ENCODE measurements at regions of chr17 and their contacts with region 1.

Region 1: DNA sequence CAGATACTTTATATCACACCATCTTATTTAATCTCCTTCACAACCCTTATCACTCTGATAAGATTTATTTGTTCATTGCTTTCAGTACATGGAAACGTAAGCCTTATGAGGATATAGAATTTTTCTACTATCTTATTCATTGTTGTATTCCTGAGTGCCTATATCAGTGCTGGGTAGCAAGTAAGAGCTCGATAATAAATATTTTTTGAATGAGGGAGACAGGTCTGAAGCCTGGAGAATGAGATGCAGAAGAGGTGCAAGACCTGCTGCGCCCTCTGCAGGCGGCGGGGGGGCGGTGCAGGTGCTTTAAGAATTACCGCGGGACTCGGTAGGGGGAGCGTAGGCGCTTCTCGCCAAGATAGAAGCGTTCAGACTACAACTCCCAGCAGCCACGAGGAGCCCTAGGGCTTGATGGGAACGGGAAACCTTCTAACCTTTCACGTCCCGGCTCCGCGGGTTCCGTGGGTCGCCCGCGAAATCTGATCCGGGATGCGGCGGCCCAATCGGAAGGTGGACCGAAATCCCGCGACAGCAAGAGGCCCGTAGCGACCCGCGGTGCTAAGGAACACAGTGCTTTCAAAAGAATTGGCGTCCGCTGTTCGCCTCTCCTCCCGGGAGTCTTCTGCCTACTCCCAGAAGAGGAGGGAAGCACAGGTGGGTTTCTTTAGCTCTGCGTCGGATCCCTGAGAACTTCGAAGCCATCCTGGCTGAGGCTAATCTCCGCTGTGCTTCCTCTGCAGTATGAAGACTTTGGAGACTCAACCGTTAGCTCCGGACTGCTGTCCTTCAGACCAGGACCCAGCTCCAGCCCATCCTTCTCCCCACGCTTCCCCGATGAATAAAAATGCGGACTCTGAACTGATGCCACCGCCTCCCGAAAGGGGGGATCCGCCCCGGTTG is at the start of gene WRAP53:
- DNase-seq: peak; percentile 97
- ATAC-seq: peak; percentile 81
- H3K4me3 Mint-ChIP-seq: peak within 1 kb of the TSS; percentile 83
- H3K27ac Mint-ChIP-seq: peak within 1 kb of the TSS; percentile 97
- H3K4me1 Mint-ChIP-seq: peaks cover 35% of the 10 kb centered on the region
- H3K27me3 Mint-ChIP-seq: no peaks in the 10 kb centered on the region
- total RNA-seq, gene WRAP53: 23.5 to 27.1 TPM

Region 2: GRCh38 chr17:7214300-7215135 is 473.6 kb before region 1 on chr17:
- CTCF ChIA-PET with region 1: no interaction called
- POLR2A ChIA-PET with region 1: no interaction called
- intact Hi-C with region 1: loop called in 1 of 2 experiments (anchors 2 kb)
- DNase-seq: peak; percentile 100
- ATAC-seq: peak; percentile 82
- H3K4me3 Mint-ChIP-seq: peak overlapping the region; percentile 81
- H3K27ac Mint-ChIP-seq: peak overlapping the region; percentile 93
- H3K4me1 Mint-ChIP-seq: peaks cover 71% of the 10 kb centered on the region
- H3K27me3 Mint-ChIP-seq: peaks cover 7% of the 10 kb centered on the region

Region 3: GRCh38 chr17:7403977-7404736 is 284.0 kb before region 1 on chr17 and contains the start of gene TMEM256:
- CTCF ChIA-PET with region 1: interaction called, 3 read pairs
- POLR2A ChIA-PET with region 1: interaction called, 9 read pairs
- intact Hi-C with region 1: loop called in 1 of 2 experiments (anchors 1 kb)
- DNase-seq: peak; percentile 99
- ATAC-seq: peak; percentile 94
- H3K4me3 Mint-ChIP-seq: peak within 1 kb of the TSS; percentile 89
- H3K27ac Mint-ChIP-seq: peak within 1 kb of the TSS; percentile 92
- H3K4me1 Mint-ChIP-seq: peaks cover 16% of the 10 kb centered on the region
- H3K27me3 Mint-ChIP-seq: peaks cover 2% of the 10 kb centered on the region
- total RNA-seq, gene TMEM256: 55.8 to 58.1 TPM

Region 4: GRCh38 chr17:7561028-7561575 is 127.1 kb before region 1 on chr17:
- CTCF ChIA-PET with region 1: interaction called, 8 read pairs
- POLR2A ChIA-PET with region 1: no interaction called
- intact Hi-C with region 1: loop called in 1 of 2 experiments (anchors 1 kb)
- DNase-seq: peak; percentile 92
- ATAC-seq: peak; percentile 75
- H3K4me3 Mint-ChIP-seq: peak overlapping the region; percentile 79
- H3K27ac Mint-ChIP-seq: peak overlapping the region; percentile 87
- H3K4me1 Mint-ChIP-seq: peaks cover 46% of the 10 kb centered on the region
- H3K27me3 Mint-ChIP-seq: no peaks in the 10 kb centered on the region

Region 5: DNA sequence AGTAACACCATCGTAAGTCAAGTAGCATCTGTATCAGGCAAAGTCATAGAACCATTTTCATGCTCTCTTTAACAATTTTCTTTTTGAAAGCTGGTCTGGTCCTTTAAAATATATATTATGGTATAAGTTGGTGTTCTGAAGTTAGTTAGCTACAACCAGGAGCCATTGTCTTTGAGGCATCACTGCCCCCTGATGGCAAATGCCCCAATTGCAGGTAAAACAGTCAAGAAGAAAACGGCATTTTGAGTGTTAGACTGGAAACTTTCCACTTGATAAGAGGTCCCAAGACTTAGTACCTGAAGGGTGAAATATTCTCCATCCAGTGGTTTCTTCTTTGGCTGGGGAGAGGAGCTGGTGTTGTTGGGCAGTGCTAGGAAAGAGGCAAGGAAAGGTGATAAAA is 14.9 kb before region 1 on chr17:
- CTCF ChIA-PET with region 1: interaction called, 15 read pairs
- POLR2A ChIA-PET with region 1: interaction called, 3 read pairs
- intact Hi-C with region 1: no loop called
- DNase-seq: peak; percentile 73
- ATAC-seq: no peak
- H3K4me3 Mint-ChIP-seq: no peak overlapping the region
- H3K27ac Mint-ChIP-seq: no peak overlapping the region
- H3K4me1 Mint-ChIP-seq: no peaks in the 10 kb centered on the region
- H3K27me3 Mint-ChIP-seq: no peaks in the 10 kb centered on the region

Region 6: DNA sequence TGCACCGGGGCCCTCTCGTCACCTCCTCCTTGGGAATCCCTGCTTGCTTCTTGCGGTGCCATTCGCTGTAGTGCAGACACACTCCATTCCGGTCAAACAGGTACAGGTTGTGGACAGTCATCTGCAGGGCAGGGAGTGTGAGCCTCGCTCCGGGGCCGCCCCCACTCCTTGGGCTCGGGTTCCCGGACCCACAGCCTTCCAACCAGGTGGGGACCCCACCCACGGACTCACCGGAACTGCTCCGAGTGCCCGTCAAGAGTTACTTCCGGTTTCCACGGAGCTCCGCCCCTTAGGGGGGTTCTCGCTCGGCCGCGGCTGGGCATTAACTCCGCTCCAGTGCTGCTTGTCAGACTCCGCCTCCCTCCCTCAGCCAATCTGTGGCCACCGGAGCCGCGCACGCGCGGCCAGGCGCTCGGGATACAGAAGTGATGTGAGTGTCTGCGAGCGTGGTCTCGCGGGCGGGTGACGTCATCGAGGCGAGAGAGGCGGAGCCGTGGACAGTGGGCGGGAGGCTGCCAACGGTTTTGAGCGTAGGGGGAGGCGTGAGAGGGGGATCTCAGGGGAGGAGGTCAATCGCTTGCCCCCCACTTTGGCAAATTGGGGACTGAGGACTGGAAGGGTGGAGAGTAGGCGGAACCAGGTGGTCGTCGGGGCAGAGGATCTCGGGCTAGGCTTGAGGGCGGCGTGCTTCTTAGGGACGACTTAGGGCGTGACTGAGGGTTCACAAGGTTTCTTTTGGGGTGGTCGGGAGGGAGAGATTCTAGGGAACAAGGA is 243.7 kb after region 1 on chr17 and contains the starts of genes CNTROB and TRAPPC1:
- CTCF ChIA-PET with region 1: no interaction called
- POLR2A ChIA-PET with region 1: interaction called, 6 read pairs
- intact Hi-C with region 1: loop called in 1 of 2 experiments (anchors 1 kb)
- DNase-seq: peak; percentile 100
- ATAC-seq: peak; percentile 99
- H3K4me3 Mint-ChIP-seq: peak within 1 kb of the TSS; percentile 95
- H3K27ac Mint-ChIP-seq: peak within 1 kb of the TSS; percentile 96
- H3K4me1 Mint-ChIP-seq: peaks cover 44% of the 10 kb centered on the region
- H3K27me3 Mint-ChIP-seq: no peaks in the 10 kb centered on the region
- total RNA-seq, gene CNTROB: 53.0 to 80.5 TPM
- total RNA-seq, gene TRAPPC1: 166 to 169 TPM

Region 7: GRCh38 chr17:8383143-8383822 is 695.1 kb after region 1 on chr17 and contains the start of gene RPL26:
- CTCF ChIA-PET with region 1: no interaction called
- POLR2A ChIA-PET with region 1: interaction called, 3 read pairs
- intact Hi-C with region 1: loop called in 1 of 2 experiments (anchors 2 kb)
- DNase-seq: peak; percentile 96
- ATAC-seq: peak; percentile 92
- H3K4me3 Mint-ChIP-seq: peak within 1 kb of the TSS; percentile 100
- H3K27ac Mint-ChIP-seq: peak within 1 kb of the TSS; percentile 99
- H3K4me1 Mint-ChIP-seq: peaks cover 50% of the 10 kb centered on the region
- H3K27me3 Mint-ChIP-seq: no peaks in the 10 kb centered on the region
- total RNA-seq, gene RPL26: 3,064 to 3,721 TPM

Measured in activated CD4-positive, alpha-beta T cell treated with anti-CD3 and anti-CD28 coated beads for 36 hours (primary cell).